ENCODE measurements at regions of chr15 and their contacts with region 1.

Region 1: DNA sequence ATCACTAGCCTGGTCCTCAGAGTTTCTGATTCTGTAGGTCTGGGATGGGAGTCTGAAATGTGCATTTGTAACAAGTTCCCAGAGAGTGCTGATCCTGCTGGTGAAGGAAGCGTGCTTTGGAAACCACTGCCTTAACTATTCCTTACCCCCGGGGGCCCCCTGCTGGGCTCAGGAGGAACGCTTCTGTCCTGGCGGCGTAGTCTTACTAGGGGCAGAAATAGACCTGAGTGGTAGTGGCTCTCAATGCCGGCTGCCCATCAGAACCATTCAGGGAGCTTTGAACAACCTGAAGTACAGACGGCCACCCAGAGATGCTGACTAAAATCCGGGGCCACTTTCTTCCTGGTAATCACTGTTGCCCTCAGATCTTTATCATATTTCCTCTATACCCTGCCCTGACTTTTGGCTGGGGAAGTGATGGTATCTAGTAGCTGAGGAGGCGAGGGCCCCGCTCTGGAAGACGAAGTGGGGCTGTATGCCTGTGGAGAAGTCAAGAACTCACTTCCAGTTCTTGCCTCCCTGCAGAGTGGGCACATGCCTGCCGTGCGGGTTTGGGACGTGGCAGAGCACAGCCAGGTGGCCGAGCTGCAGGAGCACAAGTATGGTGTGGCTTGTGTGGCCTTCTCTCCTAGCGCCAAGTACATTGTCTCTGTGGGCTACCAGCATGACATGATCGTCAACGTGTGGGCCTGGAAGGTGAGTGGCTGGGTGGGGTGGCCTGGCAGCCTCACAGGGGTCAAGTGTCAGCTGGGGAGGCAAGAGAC is 16.3 kb upstream of the JMJD7 start:
- DNase-seq: peak; percentile 88
- ATAC-seq: peak; percentile 87 to 95

Region 2: GRCh38 chr15:41207687-41208448 is 603.7 kb before region 1 on chr15:
- intact Hi-C with region 1: no loop called
- DNase-seq: no peak
- ATAC-seq: no peak

Region 3: DNA sequence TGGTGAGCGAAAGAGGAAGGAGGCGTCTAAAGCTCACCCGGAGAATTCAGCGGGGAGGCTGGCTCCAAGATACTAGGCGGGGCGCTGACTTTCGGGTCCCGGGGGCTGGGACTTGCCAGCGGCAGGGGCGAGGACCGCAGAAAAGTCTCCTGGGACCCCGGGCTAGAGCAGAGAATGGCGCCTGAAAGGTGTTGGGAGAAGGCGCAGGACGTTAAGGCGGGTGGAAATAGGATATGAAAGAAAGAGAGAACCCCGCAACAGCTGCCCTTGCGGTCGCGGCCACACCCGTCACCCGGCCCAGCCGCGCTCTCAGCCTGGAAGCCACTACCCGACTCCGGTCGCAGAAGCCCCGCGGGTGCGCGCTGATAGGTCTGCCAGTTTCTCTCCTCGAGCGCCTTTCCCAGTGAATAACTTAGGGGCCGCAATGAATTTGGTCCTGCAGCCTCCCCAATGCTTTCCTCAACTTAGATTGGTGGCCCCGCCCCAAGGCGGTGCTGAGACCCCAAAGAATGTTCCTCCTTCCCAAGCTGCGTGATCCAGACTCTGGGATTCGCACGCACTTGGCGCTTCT is 298.6 kb before region 1 on chr15:
- intact Hi-C with region 1: no loop called
- DNase-seq: peak; percentile 39
- ATAC-seq: peak; percentile 52 to 64

Region 4: GRCh38 chr15:41557673-41558399 is 253.8 kb before region 1 on chr15:
- intact Hi-C with region 1: loop called in 1 of 2 experiments (anchors 5 kb)
- DNase-seq: peak; percentile 68
- ATAC-seq: peak; percentile 67 to 68

Region 5: DNA sequence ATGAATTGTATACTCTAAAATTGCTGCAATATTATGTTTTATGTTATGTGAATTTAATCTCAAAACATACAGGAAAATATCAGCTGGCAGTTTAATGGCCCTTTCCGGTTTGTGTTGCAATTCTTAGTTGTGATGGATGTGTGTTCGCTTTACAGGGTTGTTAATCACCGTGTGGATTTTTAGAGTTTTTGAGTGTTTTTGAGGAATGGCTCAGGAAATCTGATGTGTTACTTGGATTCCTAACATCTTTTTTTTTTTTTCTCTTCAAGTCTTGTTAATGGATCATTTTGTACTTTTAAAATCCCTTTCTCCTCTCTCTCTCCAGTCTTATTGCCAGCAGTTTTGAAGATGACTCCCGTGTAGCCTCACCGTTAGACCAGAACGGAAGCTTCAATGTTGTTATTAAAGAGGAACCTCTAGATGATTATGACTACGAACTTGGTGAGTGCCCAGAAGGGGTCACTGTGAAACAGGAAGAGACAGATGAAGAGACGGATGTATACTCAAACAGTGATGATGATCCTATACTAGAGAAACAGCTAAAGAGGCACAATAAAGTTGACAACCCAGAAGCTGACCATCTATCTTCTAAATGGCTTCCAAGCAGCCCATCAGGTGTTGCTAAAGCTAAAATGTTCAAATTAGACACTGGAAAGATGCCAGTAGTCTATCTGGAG is 115.7 kb before region 1 on chr15:
- intact Hi-C with region 1: no loop called
- DNase-seq: no peak
- ATAC-seq: peak; percentile 50 to 72

Region 6: GRCh38 chr15:41746802-41747201 is 64.8 kb before region 1 on chr15:
- intact Hi-C with region 1: no loop called
- DNase-seq: no peak
- ATAC-seq: no peak

Region 7: DNA sequence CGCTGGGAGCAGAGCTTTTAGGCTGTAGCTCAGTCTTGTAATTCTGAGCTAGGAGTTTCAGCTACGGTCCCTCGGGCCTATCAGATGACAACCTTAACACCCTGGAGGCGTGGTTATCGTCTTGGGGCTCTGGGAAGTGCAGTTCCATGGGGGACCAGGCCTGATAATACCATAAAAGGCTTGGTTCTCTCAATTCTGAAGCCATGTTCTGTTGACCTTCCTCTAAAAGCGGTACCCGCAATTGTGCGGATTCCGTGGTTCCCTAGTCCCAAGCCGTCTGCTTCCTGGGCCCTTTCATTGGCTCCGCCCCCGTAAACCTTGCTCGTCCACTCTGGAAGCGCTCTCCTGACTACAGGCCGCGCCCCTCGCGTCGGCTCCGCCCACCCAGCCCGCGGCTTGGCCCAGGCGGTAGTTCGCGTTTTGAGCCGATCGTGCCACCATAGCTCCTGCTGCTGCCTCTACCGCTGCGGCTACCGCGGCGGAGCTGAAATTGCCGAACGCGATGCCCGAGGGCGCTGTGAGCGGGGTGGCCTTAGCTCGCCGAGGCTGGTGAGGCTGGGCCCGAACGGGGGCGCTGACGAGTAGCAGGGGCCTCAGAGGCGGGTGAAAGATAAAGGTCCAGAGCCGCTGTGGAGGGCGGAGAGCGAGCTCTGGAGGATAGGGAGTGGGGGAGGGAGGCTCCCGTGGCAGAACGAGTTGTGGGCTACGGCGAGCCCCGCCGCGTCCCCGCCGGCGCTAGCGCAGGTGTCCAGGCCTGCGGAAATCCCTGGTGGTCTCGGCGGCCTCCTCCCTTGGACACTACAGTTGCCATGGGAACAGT is 37.3 kb before region 1 on chr15 and contains the start of gene MAPKBP1:
- intact Hi-C with region 1: loop called (anchors 2 to 5 kb)
- DNase-seq: peak; percentile 98
- ATAC-seq: peak; percentile 97
- total RNA-seq, gene MAPKBP1: 13.9 to 19.0 TPM

Measured in left cardiac atrium (tissue), 4 donors.